Right ventricle myocardium inferior (tissue), 1 donor: ENCODE measurements at regions of chr4 and their contacts with region 1.

Region 1: GRCh38 chr4:137794764-137795254 is 262.5 kb upstream of the PCDH18 start:
- DNase-seq: no peak
- ATAC-seq: no peak

Region 2: GRCh38 chr4:137705171-137705783 is 89.5 kb before region 1 on chr4:
- intact Hi-C with region 1: no loop called
- DNase-seq: no peak
- ATAC-seq: peak; percentile 89

Region 3: GRCh38 chr4:137749466-137749865 is 45.3 kb before region 1 on chr4:
- intact Hi-C with region 1: loop called (anchors 2 kb)
- DNase-seq: no peak
- ATAC-seq: no peak

Region 4: GRCh38 chr4:138053641-138054301 is 259.0 kb after region 1 on chr4:
- intact Hi-C with region 1: no loop called
- DNase-seq: no peak
- ATAC-seq: no peak